Endothelial cell of umbilical vein (primary cell): ENCODE measurements at regions of chr6 and their contacts with region 1.

Region 1: GRCh38 chr6:34638834-34639736 is 57.5 kb downstream of the ILRUN start:
- DNase-seq: no peak
- H3K4me3 ChIP-seq: no peak overlapping the region
- H3K27ac ChIP-seq: no peak overlapping the region
- H3K4me1 ChIP-seq: no peaks in the 10 kb centered on the region
- H3K27me3 ChIP-seq: no peaks in the 10 kb centered on the region
- CTCF ChIP-seq: no peak
- POLR2A ChIP-seq: no peak

Region 2: GRCh38 chr6:34055223-34055933 is 583.7 kb before region 1 on chr6:
- CTCF ChIA-PET with region 1: no interaction called
- POLR2A ChIA-PET with region 1: no interaction called
- dilution Hi-C with region 1: no loop called
- intact Hi-C with region 1: no loop called
- DNase-seq: peak; percentile 61
- H3K4me3 ChIP-seq: no peak overlapping the region
- H3K27ac ChIP-seq: no peak overlapping the region
- H3K4me1 ChIP-seq: no peaks in the 10 kb centered on the region
- H3K27me3 ChIP-seq: peaks cover 0 to 1% of the 10 kb centered on the region in 2 experiments
- CTCF ChIP-seq: peak; percentile 71 to 97
- POLR2A ChIP-seq: no peak

Region 3: GRCh38 chr6:34650823-34651222 is 11.7 kb after region 1 on chr6:
- CTCF ChIA-PET with region 1: interaction called, 12 read pairs
- POLR2A ChIA-PET with region 1: no interaction called
- dilution Hi-C with region 1: no loop called
- intact Hi-C with region 1: no loop called
- DNase-seq: no peak
- H3K4me3 ChIP-seq: no peak overlapping the region
- H3K27ac ChIP-seq: no peak overlapping the region
- H3K4me1 ChIP-seq: peaks cover 2% of the 10 kb centered on the region
- H3K27me3 ChIP-seq: no peaks in the 10 kb centered on the region
- CTCF ChIP-seq: no peak
- POLR2A ChIP-seq: no peak

Region 4: GRCh38 chr6:34717466-34717865 is 78.4 kb after region 1 on chr6:
- CTCF ChIA-PET with region 1: no interaction called
- POLR2A ChIA-PET with region 1: no interaction called
- dilution Hi-C with region 1: no loop called
- intact Hi-C with region 1: no loop called
- DNase-seq: no peak
- H3K4me3 ChIP-seq: no peak overlapping the region
- H3K27ac ChIP-seq: no peak overlapping the region
- H3K4me1 ChIP-seq: no peaks in the 10 kb centered on the region
- H3K27me3 ChIP-seq: no peaks in the 10 kb centered on the region
- CTCF ChIP-seq: no peak
- POLR2A ChIP-seq: no peak

Region 5: DNA sequence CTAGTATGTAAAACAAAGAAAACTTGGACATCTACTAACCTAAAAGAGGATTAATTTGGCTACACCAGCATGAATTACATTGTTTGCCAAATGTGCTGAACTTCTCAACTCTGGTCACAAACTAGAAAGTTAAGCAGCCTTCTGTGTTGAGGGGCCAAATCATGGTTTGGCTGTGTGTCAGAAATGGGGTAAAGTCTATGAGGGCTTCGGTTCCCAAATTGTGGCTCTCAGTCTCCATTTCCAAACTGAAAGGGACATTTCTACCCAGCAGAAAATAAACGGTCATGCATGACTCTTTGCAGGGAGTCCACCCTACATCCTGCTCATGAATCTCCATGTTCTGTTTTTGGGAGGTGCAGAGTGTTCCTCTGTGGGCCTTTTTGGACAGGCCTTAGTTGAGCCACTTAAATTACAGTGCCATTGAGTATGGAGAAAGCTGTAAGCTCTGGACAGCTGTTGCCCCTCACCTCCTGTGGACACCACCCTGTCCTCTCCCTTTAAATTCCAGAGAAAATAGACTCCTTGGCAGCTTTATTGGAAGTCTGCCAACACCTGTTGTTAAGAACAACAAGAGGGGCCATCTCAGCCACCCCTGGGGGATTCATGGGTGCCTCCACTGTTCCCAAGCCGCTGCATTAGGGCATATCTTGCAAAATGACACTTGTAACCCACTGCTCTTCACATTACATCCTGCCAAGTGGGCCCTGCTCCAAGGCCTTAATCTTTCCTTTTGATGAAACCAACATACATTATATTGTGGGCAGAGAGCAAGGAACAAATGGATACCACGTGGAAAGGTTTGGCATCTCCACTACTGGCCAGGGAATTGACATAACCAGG is 90.8 kb after region 1 on chr6:
- CTCF ChIA-PET with region 1: no interaction called
- POLR2A ChIA-PET with region 1: no interaction called
- dilution Hi-C with region 1: no loop called
- intact Hi-C with region 1: no loop called
- DNase-seq: no peak
- H3K4me3 ChIP-seq: no peak overlapping the region
- H3K27ac ChIP-seq: no peak overlapping the region
- H3K4me1 ChIP-seq: no peaks in the 10 kb centered on the region
- H3K27me3 ChIP-seq: no peaks in the 10 kb centered on the region
- CTCF ChIP-seq: no peak
- POLR2A ChIP-seq: no peak

Region 6: DNA sequence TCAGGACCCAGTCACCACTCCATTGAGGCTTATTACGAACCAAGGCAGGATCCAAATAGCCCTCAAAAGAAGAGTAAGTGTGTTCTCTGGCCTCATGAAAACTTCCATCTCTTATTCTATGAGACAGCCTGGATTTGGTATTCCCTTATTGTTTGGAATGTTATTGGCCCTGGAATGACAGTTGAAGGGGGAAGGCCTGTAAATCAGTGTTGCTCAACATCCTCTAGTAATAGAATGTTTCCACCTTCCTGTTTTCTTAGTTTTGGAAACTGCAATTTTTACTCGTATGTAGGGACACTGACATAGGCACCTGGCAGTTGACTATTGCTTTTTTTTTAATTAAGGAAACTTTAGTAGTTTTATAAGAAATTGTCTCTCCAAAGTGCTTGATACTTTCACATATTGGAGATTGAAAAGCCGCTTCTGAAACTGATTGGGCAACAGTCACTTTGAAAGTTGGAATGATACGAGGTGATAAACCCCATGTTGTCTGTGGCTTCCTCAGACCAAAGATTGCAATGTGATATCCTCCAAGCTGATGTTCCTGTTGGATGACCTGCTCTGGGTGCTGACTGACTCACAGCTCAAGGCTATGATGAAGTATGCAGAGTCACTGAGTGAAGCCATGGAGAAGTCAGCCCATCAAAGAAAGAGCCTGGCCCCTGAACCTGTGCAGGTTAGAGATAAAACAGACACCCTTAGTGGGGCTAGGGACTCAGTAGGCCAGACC is 195.9 kb after region 1 on chr6:
- CTCF ChIA-PET with region 1: no interaction called
- POLR2A ChIA-PET with region 1: no interaction called
- dilution Hi-C with region 1: no loop called
- intact Hi-C with region 1: no loop called
- DNase-seq: no peak
- H3K4me3 ChIP-seq: no peak overlapping the region
- H3K27ac ChIP-seq: no peak overlapping the region
- H3K4me1 ChIP-seq: no peaks in the 10 kb centered on the region
- H3K27me3 ChIP-seq: no peaks in the 10 kb centered on the region
- CTCF ChIP-seq: no peak
- POLR2A ChIP-seq: no peak